WTC11 (cell line): ENCODE measurements at regions of chr17 and their contacts with region 1.

Region 1: DNA sequence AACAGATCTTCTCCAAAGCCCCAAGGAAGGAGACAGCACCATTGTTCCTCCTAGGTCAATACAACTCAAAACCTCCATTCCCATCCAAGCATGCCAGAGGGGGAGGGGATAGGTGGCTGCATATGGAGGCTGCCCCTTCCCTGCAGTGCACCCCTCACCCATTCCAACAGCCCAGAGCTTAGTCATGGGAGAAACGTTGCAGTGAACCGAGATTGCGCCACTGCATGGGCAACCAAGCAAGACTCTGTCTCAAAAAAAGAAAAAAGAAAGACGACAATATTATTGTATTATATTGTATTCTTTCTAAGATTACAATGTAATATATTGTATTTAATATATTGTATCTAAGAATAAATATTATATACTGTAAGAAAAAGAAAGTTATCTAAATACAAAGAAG is 36.4 kb upstream of the CD300E start:
- DNase-seq: no peak
- ATAC-seq: no peak
- H3K4me3 Mint-ChIP-seq: no peak overlapping the region
- H3K27ac Mint-ChIP-seq: no peak overlapping the region
- H3K4me1 Mint-ChIP-seq: peaks cover 20% of the 10 kb centered on the region
- H3K27me3 Mint-ChIP-seq: no peaks in the 10 kb centered on the region; the same call in none of the 2 replicates
- CTCF ChIP-seq: no peak

Region 2: DNA sequence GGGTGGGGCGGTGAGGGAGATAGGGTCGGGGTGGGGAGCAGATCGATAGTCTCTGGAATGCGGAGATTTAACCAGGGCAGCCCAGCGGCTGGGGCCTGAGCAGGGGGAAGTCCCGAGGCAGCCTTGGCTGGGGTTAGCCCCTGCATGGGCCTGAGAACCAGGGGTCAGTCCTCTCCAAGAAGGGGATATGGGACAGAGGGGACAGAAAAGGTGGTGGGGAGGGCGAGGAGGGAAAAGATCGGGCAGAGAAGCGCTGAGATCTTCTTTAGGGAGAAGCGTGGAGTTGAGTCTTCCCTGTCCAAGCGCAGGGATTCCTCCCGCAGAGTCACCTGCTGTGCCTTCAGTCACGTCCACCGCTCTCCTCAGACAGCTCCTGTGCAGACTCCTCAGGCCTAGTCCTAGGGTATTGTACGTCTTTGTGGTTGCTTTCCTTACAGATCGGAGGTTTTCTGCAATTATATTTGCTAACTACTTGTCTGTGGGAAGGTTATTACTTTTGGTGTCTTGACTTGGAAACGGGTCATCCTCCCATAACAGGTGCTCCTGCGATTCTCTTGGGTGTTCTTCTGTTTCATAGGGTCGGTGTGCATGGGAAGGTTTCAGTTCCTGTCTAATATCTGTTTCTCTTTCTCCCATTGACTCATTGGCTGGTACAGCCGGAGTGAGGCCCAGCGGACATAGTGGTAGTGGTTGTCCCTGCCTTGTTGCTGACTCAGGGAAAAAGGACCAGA is 192.5 kb before region 1 on chr17:
- CTCF ChIA-PET with region 1: no interaction called
- POLR2A ChIA-PET with region 1: no interaction called
- DNase-seq: no peak
- ATAC-seq: peak; percentile 61
- H3K4me3 Mint-ChIP-seq: peak overlapping the region; percentile 59
- H3K27ac Mint-ChIP-seq: no peak overlapping the region
- H3K4me1 Mint-ChIP-seq: peaks cover 4% of the 10 kb centered on the region
- H3K27me3 Mint-ChIP-seq: peaks cover 17% of the 10 kb centered on the region
- CTCF ChIP-seq: no peak

Region 3: GRCh38 chr17:74601944-74602572 is 57.8 kb before region 1 on chr17:
- CTCF ChIA-PET with region 1: interaction called, 10 read pairs
- POLR2A ChIA-PET with region 1: no interaction called
- DNase-seq: peak; percentile 61
- ATAC-seq: peak; percentile 79
- H3K4me3 Mint-ChIP-seq: no peak overlapping the region
- H3K27ac Mint-ChIP-seq: no peak overlapping the region
- H3K4me1 Mint-ChIP-seq: peaks cover 7% of the 10 kb centered on the region
- H3K27me3 Mint-ChIP-seq: peaks cover 6% of the 10 kb centered on the region
- CTCF ChIP-seq: peak; percentile 48

Region 4: GRCh38 chr17:74671031-74671771 is 11.3 kb after region 1 on chr17:
- CTCF ChIA-PET with region 1: interaction called, 41 read pairs
- POLR2A ChIA-PET with region 1: no interaction called
- DNase-seq: peak; percentile 97
- ATAC-seq: peak; percentile 95
- H3K4me3 Mint-ChIP-seq: peak overlapping the region; percentile 28
- H3K27ac Mint-ChIP-seq: no peak overlapping the region
- H3K4me1 Mint-ChIP-seq: peaks cover 5% of the 10 kb centered on the region
- H3K27me3 Mint-ChIP-seq: peaks cover 76% of the 10 kb centered on the region
- CTCF ChIP-seq: no peak

Region 5: GRCh38 chr17:74736513-74737298 is 76.8 kb after region 1 on chr17 and contains the start of gene RAB37:
- CTCF ChIA-PET with region 1: interaction called, 296 read pairs
- POLR2A ChIA-PET with region 1: interaction called, 13 read pairs
- DNase-seq: peak; percentile 70
- ATAC-seq: peak; percentile 58
- H3K4me3 Mint-ChIP-seq: peak within 1 kb of the TSS; percentile 81
- H3K27ac Mint-ChIP-seq: peak within 1 kb of the TSS; percentile 22; the same call in 1 of the 2 replicates
- H3K4me1 Mint-ChIP-seq: peaks cover 27% of the 10 kb centered on the region
- H3K27me3 Mint-ChIP-seq: peaks cover 18% of the 10 kb centered on the region
- CTCF ChIP-seq: no peak
- total RNA-seq, gene RAB37: 8.8 to 9.4 TPM (median 8.9 TPM) in 3 replicates

Region 6: GRCh38 chr17:74759243-74759801 is 99.4 kb after region 1 on chr17:
- CTCF ChIA-PET with region 1: interaction called, 24 read pairs
- POLR2A ChIA-PET with region 1: no interaction called
- DNase-seq: no peak
- ATAC-seq: no peak
- H3K4me3 Mint-ChIP-seq: no peak overlapping the region
- H3K27ac Mint-ChIP-seq: peak overlapping the region; percentile 89
- H3K4me1 Mint-ChIP-seq: peaks cover 52% of the 10 kb centered on the region
- H3K27me3 Mint-ChIP-seq: no peaks in the 10 kb centered on the region
- CTCF ChIP-seq: no peak

Region 7: DNA sequence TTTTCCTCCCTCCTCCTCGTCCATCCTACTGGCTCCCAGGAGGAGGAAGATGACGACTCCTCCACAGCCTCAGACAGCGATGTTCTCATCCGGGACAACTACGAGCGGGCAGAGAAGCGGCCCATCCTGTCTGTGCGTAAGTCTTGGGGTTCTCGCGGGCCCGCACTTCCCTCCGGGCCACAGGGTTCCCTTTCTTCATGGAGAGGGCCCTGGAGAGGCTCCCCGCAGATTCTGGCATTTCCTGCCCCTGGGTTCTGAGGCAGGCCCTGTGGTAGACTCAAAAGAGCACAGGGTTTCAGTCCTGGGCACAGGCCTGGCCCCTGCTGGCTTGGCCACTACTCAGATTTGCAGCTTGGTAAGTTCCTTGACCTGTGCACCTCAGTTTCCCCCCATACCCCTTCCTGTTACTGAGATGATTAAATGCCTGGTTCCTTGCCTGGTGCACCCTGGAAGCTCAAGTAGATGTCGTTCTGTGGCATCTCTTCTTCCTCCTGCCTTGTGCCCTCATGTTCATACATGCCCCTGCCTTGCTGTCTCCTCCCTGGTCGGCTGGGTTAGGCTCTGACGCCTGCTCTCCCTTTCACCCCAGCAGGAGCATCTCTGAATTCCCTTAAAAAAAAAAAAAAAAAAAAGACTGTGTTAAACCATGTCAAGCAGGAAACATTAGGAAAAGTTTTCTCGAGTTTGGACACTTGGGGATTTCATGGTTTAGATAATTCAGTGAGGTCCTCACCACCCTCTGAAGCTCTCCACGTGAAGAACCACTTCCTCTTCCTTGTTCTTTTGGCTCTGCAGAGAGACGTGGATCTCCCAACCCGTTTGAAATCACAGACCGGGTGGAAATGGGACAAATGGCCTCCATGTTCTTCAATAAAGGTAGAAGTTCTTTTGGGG is 130.5 kb after region 1 on chr17:
- CTCF ChIA-PET with region 1: interaction called, 12 read pairs
- POLR2A ChIA-PET with region 1: no interaction called
- DNase-seq: no peak
- ATAC-seq: no peak
- H3K4me3 Mint-ChIP-seq: no peak overlapping the region
- H3K27ac Mint-ChIP-seq: peak overlapping the region; percentile 80; the same call in 1 of the 2 replicates
- H3K4me1 Mint-ChIP-seq: peaks cover 6% of the 10 kb centered on the region
- H3K27me3 Mint-ChIP-seq: no peaks in the 10 kb centered on the region
- CTCF ChIP-seq: no peak